GM12878 (cell line): ENCODE measurements at regions of chr6 and their contacts with region 1.

Region 1: DNA sequence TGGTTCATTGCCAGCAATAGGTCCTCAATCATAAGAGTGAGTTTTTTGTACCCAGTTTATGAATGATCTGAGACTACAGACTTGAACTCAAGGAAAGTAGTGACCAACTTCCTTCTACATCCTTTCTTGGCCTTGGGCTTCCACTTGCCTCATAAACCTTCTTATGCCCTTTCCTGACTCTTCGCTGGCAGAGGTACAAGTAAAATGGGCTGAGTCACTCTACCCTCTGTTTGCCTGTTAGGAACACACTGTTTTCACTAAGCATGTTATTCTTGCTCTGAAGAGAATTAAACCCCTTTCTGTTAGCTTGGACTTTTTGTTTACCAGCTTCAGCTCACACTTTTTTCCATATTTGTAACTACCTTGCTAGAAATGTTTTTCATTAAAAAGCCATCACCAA is 74.4 kb downstream of the PKHD1 start:
- DNase-seq: no peak
- ATAC-seq: no peak
- H3K4me3 ChIP-seq: no peak overlapping the region
- H3K27ac ChIP-seq: no peak overlapping the region
- H3K4me1 ChIP-seq: no peaks in the 10 kb centered on the region
- H3K27me3 ChIP-seq: no peaks in the 10 kb centered on the region
- CTCF ChIP-seq: no peak
- EP300 ChIP-seq: no peak
- POLR2A ChIP-seq: no peak
- RAD21 ChIP-seq: no peak

Region 2: GRCh38 chr6:51996296-51996947 is 16.6 kb before region 1 on chr6:
- CTCF ChIA-PET with region 1: interaction called, 9 read pairs
- POLR2A ChIA-PET with region 1: interaction called, 3 read pairs
- RAD21 ChIA-PET with region 1: no interaction called
- SMC1A ChIA-PET with region 1: interaction called, 17 read pairs
- in situ Hi-C with region 1: no loop called
- intact Hi-C with region 1: no loop called
- DNase-seq: peak; percentile 72
- ATAC-seq: peak; percentile 95
- H3K4me3 ChIP-seq: 0 out of 2 replicates have a peak overlapping the region, but pooled peaks have one; percentile 3
- H3K27ac ChIP-seq: peak overlapping the region; percentile 64
- H3K4me1 ChIP-seq: peaks cover 14% of the 10 kb centered on the region
- H3K27me3 ChIP-seq: no peaks in the 10 kb centered on the region
- CTCF ChIP-seq: no peak
- EP300 ChIP-seq: peak in 1 of 2 experiments; percentile 60; a peak in 1 of 4 replicates
- POLR2A ChIP-seq: no peak
- RAD21 ChIP-seq: no peak